ENCODE measurements at regions of chr17 and their contacts with region 1.

Region 1: GRCh38 chr17:57662644-57663308 is 82.3 kb downstream of the CCDC182 start:
- DNase-seq: peak; percentile 90 to 98
- H3K4me3 ChIP-seq: peak overlapping the region; percentile 44 to 50
- H3K27ac ChIP-seq: peak overlapping the region; percentile 68 to 73
- H3K4me1 ChIP-seq: peaks cover 0 to 7% of the 10 kb centered on the region in 2 donors
- H3K27me3 ChIP-seq: no peaks in the 10 kb centered on the region
- CTCF ChIP-seq: peak in 1 of 3 experiments; percentile 11

Region 2: DNA sequence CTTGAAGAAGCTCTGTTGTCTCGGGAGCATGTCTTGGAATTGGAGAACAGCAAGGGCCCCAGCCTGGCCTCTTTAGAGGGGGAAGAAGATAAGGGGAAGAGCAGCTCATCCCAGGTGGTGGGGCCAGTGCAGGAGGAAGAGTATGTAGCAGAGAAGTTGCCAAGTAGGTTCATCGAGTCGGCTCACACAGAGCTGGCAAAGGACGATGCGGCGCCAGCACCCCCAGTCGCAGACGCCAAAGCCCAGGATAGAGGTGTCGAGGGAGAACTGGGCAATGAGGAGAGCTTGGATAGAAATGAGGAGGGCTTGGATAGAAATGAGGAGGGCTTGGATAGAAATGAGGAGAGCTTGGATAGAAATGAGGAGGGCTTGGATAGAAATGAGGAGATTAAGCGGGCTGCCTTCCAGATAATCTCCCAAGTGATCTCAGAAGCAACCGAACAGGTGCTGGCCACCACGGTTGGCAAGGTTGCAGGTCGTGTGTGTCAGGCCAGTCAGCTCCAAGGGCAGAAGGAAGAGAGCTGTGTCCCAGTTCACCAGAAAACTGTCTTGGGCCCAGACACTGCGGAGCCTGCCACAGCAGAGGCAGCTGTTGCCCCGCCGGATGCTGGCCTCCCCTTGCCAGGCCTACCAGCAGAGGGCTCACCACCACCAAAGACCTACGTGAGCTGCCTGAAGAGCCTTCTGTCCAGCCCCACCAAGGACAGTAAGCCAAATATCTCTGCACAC is 556.5 kb before region 1 on chr17:
- intact Hi-C with region 1: loop called (anchors 5 kb)
- DNase-seq: no peak
- H3K4me3 ChIP-seq: no peak overlapping the region
- H3K27ac ChIP-seq: peak overlapping the region; percentile 90 to 91
- H3K4me1 ChIP-seq: peaks cover 21 to 47% of the 10 kb centered on the region in 2 donors
- H3K27me3 ChIP-seq: no peaks in the 10 kb centered on the region
- CTCF ChIP-seq: peak in 2 of 3 experiments; percentile 23 to 25

Region 3: DNA sequence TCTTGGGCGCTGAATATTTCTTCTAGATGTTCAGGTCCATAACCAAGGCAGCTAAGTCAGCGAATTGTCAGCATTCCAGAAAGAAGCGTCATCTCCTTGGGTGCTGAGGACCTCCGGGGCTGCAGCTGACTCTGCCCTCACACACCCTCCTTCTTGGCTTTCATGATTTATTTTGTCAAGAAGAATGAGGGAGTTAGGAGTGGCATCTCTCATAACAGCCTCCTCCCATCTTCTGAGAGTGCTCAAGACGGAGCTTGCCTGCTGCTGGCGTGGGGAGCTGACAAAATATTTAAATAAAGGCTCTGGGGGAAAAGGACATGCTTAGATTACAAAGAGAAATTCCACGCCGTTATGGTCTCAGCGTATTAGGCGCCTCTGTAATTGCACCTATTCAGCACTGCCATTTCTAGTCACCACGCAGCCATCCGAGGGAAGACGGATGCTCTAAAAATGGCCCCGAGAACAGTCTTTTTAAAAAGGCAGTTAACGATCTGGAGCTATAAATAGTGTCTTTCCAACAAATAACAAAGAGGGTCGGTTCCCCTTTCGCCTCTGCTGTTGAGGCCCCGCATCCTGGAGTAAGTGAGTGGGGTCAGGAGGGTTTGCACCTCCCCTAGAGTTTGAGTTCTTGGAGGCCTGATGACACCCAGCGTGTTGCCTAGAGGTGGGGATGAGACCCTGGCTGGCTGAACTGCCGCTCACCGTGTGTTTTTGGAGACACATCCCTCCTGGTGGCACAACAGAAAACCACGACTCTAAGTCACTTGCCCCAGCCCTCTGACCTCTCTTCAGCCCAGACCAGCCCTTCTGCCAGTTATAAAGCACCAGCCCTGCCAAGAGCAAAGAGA is 104.7 kb before region 1 on chr17:
- intact Hi-C with region 1: loop called (anchors 5 kb)
- DNase-seq: peak in 1 of 2 donors; percentile 78
- H3K4me3 ChIP-seq: peak overlapping the region in 1 of 2 donors; percentile 30
- H3K27ac ChIP-seq: peak overlapping the region in 1 of 2 donors; percentile 26
- H3K4me1 ChIP-seq: peaks cover 0 to 14% of the 10 kb centered on the region in 2 donors
- H3K27me3 ChIP-seq: no peaks in the 10 kb centered on the region
- CTCF ChIP-seq: no peak

Region 4: DNA sequence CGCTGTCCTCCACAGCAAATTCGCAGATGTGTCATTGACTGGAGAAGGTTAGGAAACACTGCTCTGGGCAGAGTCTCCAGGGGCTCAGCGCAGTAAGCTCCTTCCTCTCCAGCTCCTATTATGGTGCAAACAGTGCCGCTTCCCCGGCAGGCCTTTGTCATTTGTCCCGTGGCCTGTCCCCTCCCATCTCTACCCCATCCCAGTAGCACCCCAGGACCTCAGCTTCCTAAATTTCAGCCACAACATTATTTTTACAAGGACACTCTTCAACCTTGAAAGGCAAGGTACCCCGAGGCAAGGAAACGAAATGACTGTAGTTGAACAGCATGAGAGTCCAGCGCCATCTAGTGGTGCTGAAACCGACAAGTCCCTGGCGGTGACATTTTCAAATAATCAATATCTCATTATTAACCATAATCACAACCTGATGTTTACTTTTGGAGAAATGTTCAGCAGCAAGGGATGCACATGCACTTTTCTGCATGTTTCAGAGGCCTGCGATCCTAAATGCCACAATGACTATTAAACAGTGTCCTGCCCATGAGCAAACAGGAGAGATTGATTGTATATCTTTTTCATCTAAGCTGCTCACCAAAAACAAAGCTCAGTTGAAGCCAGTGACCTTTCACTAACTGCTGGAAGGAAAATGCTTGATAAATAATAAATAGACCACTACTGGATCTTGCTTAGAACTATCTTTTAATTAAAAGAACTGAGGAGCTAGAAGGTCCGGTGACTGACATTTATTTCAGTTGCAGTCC is 170.6 kb after region 1 on chr17:
- intact Hi-C with region 1: loop called (anchors 2 kb)
- DNase-seq: peak in 1 of 2 donors; percentile 85
- H3K4me3 ChIP-seq: peak overlapping the region; percentile 51 to 60
- H3K27ac ChIP-seq: peak overlapping the region; percentile 83 to 88
- H3K4me1 ChIP-seq: peaks cover 10 to 19% of the 10 kb centered on the region in 2 donors
- H3K27me3 ChIP-seq: no peaks in the 10 kb centered on the region
- CTCF ChIP-seq: peak; percentile 86 to 93 (median 92)

Measured in ascending aorta (tissue), 2 donors.